ENCODE measurements at regions of chr17 and their contacts with region 1.

Region 1: DNA sequence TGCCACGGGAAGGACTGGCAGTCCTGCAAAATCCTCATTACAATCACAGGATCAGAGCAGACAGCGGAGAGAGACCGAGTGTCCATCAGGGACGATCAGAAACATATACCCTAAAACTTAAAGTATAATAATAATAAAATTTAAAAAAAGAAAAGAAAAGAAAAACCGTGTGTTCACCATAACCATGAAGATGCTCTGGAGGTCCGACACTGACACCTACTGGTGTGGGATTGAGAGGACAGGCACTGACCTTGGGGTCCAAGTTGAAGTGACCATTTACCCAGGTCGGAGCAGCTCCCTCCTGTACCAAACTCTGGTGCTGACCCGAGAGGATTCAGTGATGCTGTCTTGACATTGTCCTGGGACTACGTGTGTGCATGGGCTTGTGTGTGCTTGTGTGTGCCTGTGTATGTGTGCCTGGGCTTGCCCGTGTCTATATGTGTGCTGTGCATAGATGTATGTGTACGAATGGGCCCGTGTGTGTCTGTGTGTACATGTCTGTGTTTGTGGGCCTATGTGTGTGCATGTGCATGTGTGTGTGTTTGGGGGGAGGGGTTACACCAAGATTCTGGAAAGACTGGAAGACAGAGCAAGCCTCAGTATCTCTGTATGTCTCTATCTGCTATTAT is 10.0 kb upstream of the CD300LD start:
- DNase-seq: peak; percentile 70 to 79
- ATAC-seq: peak; percentile 65 to 85; a peak in 4 of 6 replicates
- H3K4me3 ChIP-seq: no peak overlapping the region
- H3K27ac ChIP-seq: peak overlapping the region in 1 of 2 experiments; percentile 44; a peak in 2 of 6 replicates
- H3K4me1 ChIP-seq: peaks cover 12% of the 10 kb centered on the region
- CTCF ChIP-seq: peak; percentile 96
- EP300 ChIP-seq: no peak
- POLR2A ChIP-seq: no peak
- RAD21 ChIP-seq: peak; percentile 91 to 93

Region 2: DNA sequence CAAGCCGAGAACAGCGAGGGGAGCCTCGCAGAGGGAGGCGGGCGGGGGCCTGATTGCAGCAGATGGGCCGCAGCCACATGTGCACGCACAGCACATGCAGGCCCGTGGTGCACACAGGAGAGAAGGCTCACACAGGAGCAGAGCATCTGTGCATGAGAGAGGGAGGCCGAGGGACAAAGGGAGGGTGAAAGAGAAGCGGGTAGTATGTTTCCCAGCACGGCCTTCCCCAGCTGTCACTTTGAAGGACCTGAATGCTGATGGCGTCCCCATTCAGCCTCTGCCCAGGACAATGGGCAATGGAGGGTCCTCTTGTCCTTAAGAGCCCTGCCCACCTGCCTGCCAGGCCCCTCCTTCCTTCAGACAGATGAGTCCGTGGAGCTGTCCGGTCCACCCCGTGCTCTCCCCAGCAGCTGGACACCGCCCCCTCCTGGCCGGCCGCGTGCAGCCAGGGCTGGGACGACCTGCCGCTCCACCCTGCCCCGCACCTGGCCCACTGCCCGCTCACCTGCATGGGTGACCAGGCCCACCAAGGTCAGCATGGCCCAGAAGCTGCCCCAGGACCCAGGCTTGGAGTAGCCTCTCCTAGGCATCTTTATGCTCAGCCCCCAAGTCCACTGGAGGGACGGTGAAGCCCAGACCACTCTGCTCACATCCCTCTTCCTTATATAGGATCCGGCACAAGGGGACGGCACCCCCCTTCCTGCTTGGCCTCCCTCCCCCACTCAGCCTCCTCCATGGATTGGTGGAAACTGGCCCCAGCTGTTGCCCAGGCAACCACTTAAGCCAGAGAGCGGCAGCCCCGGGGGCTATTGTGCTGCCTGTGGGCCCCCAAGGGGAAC is 240.6 kb before region 1 on chr17 and contains the start of gene BTBD17:
- CTCF ChIA-PET with region 1: interaction called, 17 read pairs
- POLR2A ChIA-PET with region 1: no interaction called
- DNase-seq: peak; percentile 67 to 74
- ATAC-seq: peak; percentile 78 to 94
- H3K4me3 ChIP-seq: no peak within 1 kb of the TSS
- H3K27ac ChIP-seq: no peak within 1 kb of the TSS
- H3K4me1 ChIP-seq: peaks cover 8% of the 10 kb centered on the region; the same call in 1 of the 3 replicates
- CTCF ChIP-seq: peak; percentile 66
- EP300 ChIP-seq: no peak
- POLR2A ChIP-seq: no peak
- RAD21 ChIP-seq: peak; percentile 58 to 63
- polyA plus RNA-seq, gene BTBD17: not detected in 2 replicates

Region 3: GRCh38 chr17:74493381-74493833 is 108.7 kb before region 1 on chr17:
- CTCF ChIA-PET with region 1: interaction called, 14 read pairs
- POLR2A ChIA-PET with region 1: no interaction called
- DNase-seq: peak; percentile 75 to 86
- ATAC-seq: peak; percentile 97 to 98
- H3K4me3 ChIP-seq: no peak overlapping the region
- H3K27ac ChIP-seq: no peak overlapping the region
- H3K4me1 ChIP-seq: no peaks in the 10 kb centered on the region
- CTCF ChIP-seq: peak; percentile 90
- EP300 ChIP-seq: no peak
- POLR2A ChIP-seq: no peak
- RAD21 ChIP-seq: peak; percentile 92 to 97

Region 4: DNA sequence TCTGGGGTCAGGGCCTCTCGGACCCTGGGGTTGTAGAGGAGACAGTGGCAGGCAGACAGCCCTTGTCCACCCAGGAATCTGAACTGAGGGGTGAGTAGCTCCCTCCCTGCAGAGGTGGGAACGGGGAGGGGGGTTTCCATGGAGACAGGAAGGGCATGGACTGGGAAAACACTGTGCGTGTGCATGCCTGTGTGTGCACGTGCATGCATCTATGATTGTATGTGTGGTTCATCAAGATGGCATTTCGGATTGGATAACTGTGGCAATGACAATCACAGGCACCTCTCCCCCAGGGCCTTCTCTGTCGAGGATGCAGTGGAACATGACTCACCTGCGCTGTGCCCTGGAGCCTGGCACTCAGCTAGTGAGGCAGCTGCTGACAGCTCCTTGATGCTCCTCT is 50.0 kb before region 1 on chr17:
- CTCF ChIA-PET with region 1: interaction called, 27 read pairs
- POLR2A ChIA-PET with region 1: no interaction called
- DNase-seq: peak in 1 of 2 experiments; percentile 23
- ATAC-seq: peak; percentile 16 to 38; a peak in 4 of 6 replicates
- H3K4me3 ChIP-seq: no peak overlapping the region
- H3K27ac ChIP-seq: no peak overlapping the region
- H3K4me1 ChIP-seq: no peaks in the 10 kb centered on the region
- CTCF ChIP-seq: no peak
- EP300 ChIP-seq: no peak
- POLR2A ChIP-seq: no peak
- RAD21 ChIP-seq: no peak

Region 5: GRCh38 chr17:74573169-74573568 is 28.9 kb before region 1 on chr17:
- CTCF ChIA-PET with region 1: interaction called, 142 read pairs
- POLR2A ChIA-PET with region 1: no interaction called
- DNase-seq: peak in 1 of 2 experiments; percentile 46
- ATAC-seq: peak; percentile 9 to 32; a peak in 2 of 6 replicates
- H3K4me3 ChIP-seq: no peak overlapping the region
- H3K27ac ChIP-seq: no peak overlapping the region; a peak in 1 of 6 replicates
- H3K4me1 ChIP-seq: peaks cover 24% of the 10 kb centered on the region
- CTCF ChIP-seq: no peak
- EP300 ChIP-seq: no peak
- POLR2A ChIP-seq: no peak
- RAD21 ChIP-seq: no peak

Region 6: GRCh38 chr17:74625661-74626060 is 23.6 kb after region 1 on chr17:
- CTCF ChIA-PET with region 1: interaction called, 15 read pairs
- POLR2A ChIA-PET with region 1: no interaction called
- DNase-seq: no peak
- ATAC-seq: no peak
- H3K4me3 ChIP-seq: no peak overlapping the region
- H3K27ac ChIP-seq: no peak overlapping the region
- H3K4me1 ChIP-seq: no peaks in the 10 kb centered on the region
- CTCF ChIP-seq: no peak
- EP300 ChIP-seq: no peak
- POLR2A ChIP-seq: no peak
- RAD21 ChIP-seq: no peak

Measured in A549 (cell line).